BJ (cell line): ENCODE measurements at regions of chr10 and their contacts with region 1.

Region 1: DNA sequence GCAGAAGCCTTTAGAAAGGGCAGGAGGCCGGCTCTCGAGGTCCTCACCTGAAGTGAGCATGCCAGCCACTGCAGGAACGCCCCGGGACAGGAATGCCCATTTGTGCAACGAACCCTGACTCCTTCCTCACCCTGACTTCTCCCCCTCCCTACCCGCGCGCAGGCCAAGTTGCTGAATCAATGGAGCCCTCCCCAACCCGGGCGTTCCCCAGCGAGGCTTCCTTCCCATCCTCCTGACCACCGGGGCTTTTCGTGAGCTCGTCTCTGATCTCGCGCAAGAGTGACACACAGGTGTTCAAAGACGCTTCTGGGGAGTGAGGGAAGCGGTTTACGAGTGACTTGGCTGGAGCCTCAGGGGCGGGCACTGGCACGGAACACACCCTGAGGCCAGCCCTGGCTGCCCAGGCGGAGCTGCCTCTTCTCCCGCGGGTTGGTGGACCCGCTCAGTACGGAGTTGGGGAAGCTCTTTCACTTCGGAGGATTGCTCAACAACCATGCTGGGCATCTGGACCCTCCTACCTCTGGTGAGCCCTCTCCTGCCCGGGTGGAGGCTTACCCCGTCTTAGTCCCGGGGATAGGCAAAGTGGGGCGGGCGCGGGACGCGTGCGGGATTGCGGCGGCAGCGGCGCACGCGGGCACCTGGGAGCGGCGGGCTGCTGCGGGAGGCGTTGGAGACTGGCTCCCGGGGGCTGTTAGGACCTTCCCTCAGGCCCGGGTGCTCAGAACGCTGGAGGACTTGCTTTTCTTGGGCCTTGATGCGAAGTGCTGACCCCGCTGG is at the start of gene FAS:
- DNase-seq: no peak
- H3K4me3 ChIP-seq: peak within 1 kb of the TSS; percentile 75
- H3K27me3 ChIP-seq: no peaks in the 10 kb centered on the region
- CTCF ChIP-seq: no peak
- polyA plus RNA-seq, gene FAS: 52.3 and 83.2 TPM in 2 replicates

Region 2: DNA sequence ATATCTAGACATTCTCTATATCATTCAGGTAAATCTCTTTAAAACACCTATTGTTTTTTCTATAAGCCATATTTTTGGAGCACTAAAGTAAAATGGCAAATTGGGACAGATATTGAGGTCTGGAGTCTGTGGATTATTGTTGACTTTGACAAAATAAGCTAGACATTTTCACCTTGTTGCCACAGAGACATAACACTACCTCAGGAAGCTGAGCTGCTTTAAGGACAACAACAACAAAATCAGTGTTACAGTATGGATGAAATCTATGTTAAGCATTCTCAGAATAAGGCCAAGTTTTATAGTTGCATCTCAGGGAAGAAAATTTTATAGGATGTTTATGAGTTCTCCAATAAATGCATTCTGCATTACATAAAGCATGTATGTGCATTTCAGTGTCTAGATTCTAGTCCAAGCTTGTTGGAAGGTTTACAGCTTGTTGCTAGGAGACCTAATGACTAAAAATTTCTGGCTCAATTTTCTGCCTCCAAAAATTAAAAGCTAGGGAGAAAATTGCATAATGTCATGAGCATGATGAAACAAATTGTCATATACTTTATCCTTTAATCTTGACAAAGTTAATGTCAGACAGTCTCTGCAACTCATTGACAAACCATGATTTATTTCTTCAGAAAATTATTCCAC is 169.7 kb before region 1 on chr10:
- CTCF ChIA-PET with region 1: no interaction called
- POLR2A ChIA-PET with region 1: no interaction called
- DNase-seq: peak; percentile 77
- H3K4me3 ChIP-seq: no peak overlapping the region
- H3K27me3 ChIP-seq: no peaks in the 10 kb centered on the region
- CTCF ChIP-seq: no peak

Region 3: DNA sequence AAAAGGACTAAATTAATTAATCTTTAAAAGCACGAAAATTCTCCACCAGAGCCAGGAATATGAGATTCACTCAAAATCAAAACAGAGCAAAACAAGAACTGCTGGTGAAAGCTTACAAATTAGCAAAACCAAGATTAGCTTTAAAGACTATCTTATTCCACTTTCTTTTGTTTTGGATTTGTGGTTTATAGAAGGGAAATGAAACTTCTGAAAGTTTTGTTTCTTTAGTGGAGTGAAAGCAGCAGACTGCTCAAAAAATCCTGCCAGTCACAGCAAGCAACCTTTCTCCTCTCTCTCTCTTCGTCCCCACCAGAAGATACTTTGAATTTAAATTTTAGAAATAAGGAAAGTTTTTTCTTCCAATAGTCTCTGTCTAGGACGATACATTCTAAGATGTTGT is 45.8 kb before region 1 on chr10:
- CTCF ChIA-PET with region 1: interaction called, 13 read pairs
- POLR2A ChIA-PET with region 1: interaction called, 4 read pairs
- DNase-seq: no peak
- H3K4me3 ChIP-seq: no peak overlapping the region
- H3K27me3 ChIP-seq: no peaks in the 10 kb centered on the region
- CTCF ChIP-seq: no peak

Region 4: GRCh38 chr10:88964869-88965430 is 25.6 kb before region 1 on chr10:
- CTCF ChIA-PET with region 1: interaction called, 10 read pairs
- POLR2A ChIA-PET with region 1: interaction called, 3 read pairs
- DNase-seq: no peak
- H3K4me3 ChIP-seq: no peak overlapping the region
- H3K27me3 ChIP-seq: no peaks in the 10 kb centered on the region
- CTCF ChIP-seq: no peak

Region 5: GRCh38 chr10:88979153-88979562 is 11.4 kb before region 1 on chr10:
- CTCF ChIA-PET with region 1: interaction called, 8 read pairs
- POLR2A ChIA-PET with region 1: interaction called, 10 read pairs
- DNase-seq: peak; percentile 47
- H3K4me3 ChIP-seq: no peak overlapping the region
- H3K27me3 ChIP-seq: no peaks in the 10 kb centered on the region
- CTCF ChIP-seq: no peak

Region 6: GRCh38 chr10:89029785-89030437 is 39.3 kb after region 1 on chr10:
- CTCF ChIA-PET with region 1: interaction called, 10 read pairs
- POLR2A ChIA-PET with region 1: no interaction called
- DNase-seq: peak; percentile 31
- H3K4me3 ChIP-seq: no peak overlapping the region
- H3K27me3 ChIP-seq: no peaks in the 10 kb centered on the region
- CTCF ChIP-seq: peak; percentile 75

Region 7: GRCh38 chr10:89217057-89217990 is 226.8 kb after region 1 on chr10:
- CTCF ChIA-PET with region 1: interaction called, 24 read pairs
- POLR2A ChIA-PET with region 1: no interaction called
- DNase-seq: no peak
- H3K4me3 ChIP-seq: no peak overlapping the region
- H3K27me3 ChIP-seq: no peaks in the 10 kb centered on the region
- CTCF ChIP-seq: peak; percentile 69